ENCODE measurements at regions of chr17 and their contacts with region 1.

Region 1: DNA sequence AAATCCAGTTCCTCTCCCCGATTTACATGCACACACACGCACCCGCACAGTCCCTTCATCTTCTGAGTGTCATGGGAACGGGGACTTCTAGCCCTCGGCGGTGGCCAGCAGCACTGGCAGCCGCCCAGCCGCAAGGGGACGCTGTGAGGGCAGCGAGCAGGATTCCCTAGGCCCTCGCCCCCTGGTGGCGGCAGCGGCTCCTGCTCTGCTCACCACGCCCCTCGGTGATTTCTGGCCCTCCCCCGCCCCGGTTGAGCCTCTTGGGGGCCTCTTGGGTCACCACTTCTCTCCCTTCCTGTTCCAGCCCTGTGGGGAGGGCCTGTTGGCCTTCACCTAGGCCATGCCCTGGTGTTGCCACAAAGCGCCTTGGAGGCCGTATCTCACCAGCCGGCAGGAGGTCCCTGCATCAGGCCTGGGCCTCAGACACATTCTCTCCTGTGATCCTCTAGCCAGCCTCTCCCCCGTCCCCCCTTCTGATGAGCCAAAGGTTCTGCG is 75.2 kb upstream of the KSR1 start:
- DNase-seq: peak; percentile 91
- ATAC-seq: peak; percentile 98
- H3K4me3 Mint-ChIP-seq: no peak overlapping the region
- H3K27ac Mint-ChIP-seq: no peak overlapping the region
- H3K4me1 Mint-ChIP-seq: no peaks in the 10 kb centered on the region
- H3K27me3 Mint-ChIP-seq: peaks cover 11% of the 10 kb centered on the region
- CTCF ChIP-seq: peak; percentile 100

Region 2: DNA sequence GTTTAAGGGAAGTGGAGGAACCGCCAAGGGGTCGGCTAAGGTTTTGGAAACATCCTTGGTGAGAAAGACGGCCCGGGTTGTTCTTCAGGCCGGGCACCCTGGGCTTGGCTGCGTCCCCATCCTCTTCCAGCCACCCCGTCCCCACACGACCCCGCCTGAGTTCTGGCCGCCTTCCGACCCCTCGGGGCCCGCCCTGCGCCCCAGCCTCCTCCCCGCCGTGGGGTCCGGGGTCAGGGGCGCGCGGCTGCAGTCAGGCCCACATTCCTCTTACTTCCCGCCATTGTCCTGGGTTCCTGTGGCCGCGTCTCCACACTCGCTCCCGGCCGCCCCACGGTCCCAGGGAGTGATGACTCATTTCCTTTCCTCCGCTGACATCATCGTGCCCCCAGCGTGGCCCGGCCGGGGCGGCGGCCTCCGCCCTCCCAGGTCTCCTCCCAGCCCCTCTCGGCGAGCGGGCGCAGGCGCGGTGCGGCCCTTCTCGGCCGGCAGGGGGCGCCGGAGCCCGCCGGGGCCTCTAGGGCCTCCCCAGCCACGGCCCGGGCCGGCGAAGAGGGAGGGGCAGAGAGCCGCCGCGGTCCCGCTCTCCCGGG is 27.5 kb before region 1 on chr17:
- CTCF ChIA-PET with region 1: interaction called, 20 read pairs
- POLR2A ChIA-PET with region 1: interaction called, 3 read pairs
- intact Hi-C with region 1: no loop called
- DNase-seq: peak; percentile 90
- ATAC-seq: peak; percentile 88
- H3K4me3 Mint-ChIP-seq: peak overlapping the region; percentile 78
- H3K27ac Mint-ChIP-seq: peak overlapping the region; percentile 96
- H3K4me1 Mint-ChIP-seq: peaks cover 25% of the 10 kb centered on the region
- H3K27me3 Mint-ChIP-seq: no peaks in the 10 kb centered on the region
- CTCF ChIP-seq: peak; percentile 90

Region 3: DNA sequence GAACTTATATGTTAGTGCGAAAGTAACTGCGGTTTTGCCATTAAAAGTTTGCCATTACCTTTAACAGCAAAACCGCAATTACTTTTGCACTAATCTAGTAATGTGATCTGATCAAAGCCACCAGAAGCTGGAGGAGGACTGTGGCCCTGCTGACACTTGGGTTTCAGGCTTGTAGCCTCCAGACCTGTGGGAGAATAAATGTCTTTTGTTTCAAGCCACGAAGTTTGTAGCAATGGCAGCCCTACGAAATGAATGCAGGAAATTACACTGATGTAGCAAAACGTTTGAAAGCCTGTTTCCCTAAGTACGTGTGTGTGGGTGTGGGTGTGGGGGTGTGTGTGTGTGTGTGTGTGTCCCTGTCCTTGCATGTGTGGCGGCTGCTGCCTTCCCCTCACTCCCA is 20.5 kb before region 1 on chr17:
- CTCF ChIA-PET with region 1: interaction called, 16 read pairs
- POLR2A ChIA-PET with region 1: no interaction called
- intact Hi-C with region 1: no loop called
- DNase-seq: no peak
- ATAC-seq: no peak
- H3K4me3 Mint-ChIP-seq: no peak overlapping the region
- H3K27ac Mint-ChIP-seq: no peak overlapping the region
- H3K4me1 Mint-ChIP-seq: peaks cover 10% of the 10 kb centered on the region
- H3K27me3 Mint-ChIP-seq: no peaks in the 10 kb centered on the region
- CTCF ChIP-seq: no peak

Region 4: GRCh38 chr17:27367121-27367991 is 13.7 kb before region 1 on chr17:
- CTCF ChIA-PET with region 1: interaction called, 16 read pairs
- POLR2A ChIA-PET with region 1: no interaction called
- intact Hi-C with region 1: no loop called
- DNase-seq: no peak
- ATAC-seq: no peak
- H3K4me3 Mint-ChIP-seq: no peak overlapping the region
- H3K27ac Mint-ChIP-seq: no peak overlapping the region
- H3K4me1 Mint-ChIP-seq: no peaks in the 10 kb centered on the region
- H3K27me3 Mint-ChIP-seq: peaks cover 3% of the 10 kb centered on the region
- CTCF ChIP-seq: no peak

Region 5: GRCh38 chr17:27413792-27414191 is 32.7 kb after region 1 on chr17:
- CTCF ChIA-PET with region 1: interaction called, 16 read pairs
- POLR2A ChIA-PET with region 1: no interaction called
- intact Hi-C with region 1: no loop called
- DNase-seq: no peak
- ATAC-seq: no peak
- H3K4me3 Mint-ChIP-seq: no peak overlapping the region
- H3K27ac Mint-ChIP-seq: no peak overlapping the region
- H3K4me1 Mint-ChIP-seq: no peaks in the 10 kb centered on the region
- H3K27me3 Mint-ChIP-seq: peaks cover 5% of the 10 kb centered on the region
- CTCF ChIP-seq: no peak

Region 6: DNA sequence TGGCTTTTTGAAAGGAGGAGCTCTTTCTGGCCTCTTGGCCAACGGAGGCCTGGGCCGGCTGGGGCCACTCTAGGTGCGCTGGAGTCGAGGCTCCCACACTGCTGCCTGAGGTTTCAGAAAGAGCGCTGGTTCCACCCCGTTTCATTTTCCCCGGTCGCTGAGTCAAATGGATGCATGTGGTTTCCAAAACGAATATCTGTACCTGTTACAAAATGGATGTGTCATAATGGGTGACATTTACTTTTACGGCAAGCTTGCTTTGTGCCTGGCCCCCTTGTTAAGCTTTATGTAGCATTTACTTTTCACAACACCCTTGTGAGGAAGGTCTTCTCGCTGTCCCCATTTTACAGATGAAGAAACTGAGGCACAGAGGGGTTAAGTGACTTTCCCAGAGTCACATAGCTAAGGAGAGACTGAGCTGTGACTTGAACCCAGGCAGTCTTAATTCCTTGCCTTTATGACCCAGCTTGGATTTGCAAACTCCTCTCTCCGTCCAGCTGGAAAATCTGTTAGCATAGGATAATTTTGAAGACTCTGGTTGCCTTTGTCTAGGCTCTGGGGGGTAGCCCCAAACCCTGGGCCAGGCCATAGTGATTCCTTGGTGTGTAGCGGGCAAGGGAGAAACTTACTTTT is 85.8 kb after region 1 on chr17:
- CTCF ChIA-PET with region 1: interaction called, 11 read pairs
- POLR2A ChIA-PET with region 1: no interaction called
- intact Hi-C with region 1: no loop called
- DNase-seq: peak; percentile 92
- ATAC-seq: peak; percentile 84
- H3K4me3 Mint-ChIP-seq: peak overlapping the region; percentile 67
- H3K27ac Mint-ChIP-seq: peak overlapping the region; percentile 96
- H3K4me1 Mint-ChIP-seq: peaks cover 85% of the 10 kb centered on the region
- H3K27me3 Mint-ChIP-seq: no peaks in the 10 kb centered on the region
- CTCF ChIP-seq: no peak